Heart left ventricle (tissue), 16 donors: ENCODE measurements at regions of chr6 and their contacts with region 1.

Region 1: DNA sequence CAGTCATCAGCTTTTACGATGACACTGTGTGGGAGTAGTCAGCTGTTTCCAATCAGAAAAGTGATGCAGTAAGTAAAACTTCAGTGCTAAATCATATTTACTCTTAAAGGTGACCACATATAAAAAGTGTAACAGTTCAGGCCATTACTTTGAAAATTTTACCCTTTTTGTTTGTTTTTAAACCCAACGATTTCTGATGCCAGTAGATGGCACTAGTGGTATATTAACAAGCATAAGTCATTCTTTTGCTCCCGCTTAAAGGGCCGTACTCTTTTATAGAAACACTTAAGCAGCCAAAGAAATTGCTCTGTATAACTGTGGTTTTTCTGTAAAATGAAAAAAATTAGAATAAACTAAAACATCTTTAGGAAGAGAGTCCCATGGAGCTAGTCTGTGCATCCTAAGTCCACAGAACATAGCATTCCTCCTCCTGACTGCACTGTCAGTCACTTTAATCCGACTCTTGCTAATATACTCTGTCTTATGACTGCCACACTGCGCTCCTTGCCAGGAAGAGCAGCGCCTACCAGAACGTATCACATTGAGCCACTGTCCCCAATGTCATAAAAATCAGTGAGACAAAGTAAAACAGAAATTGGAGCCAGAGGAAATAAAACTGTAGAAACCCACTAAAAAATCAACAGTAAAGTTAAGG is 25.0 kb downstream of the HEBP2 start:
- DNase-seq: no peak
- ATAC-seq: peak in 3 of 4 donors; percentile 8 to 43 (median 33)
- H3K4me3 ChIP-seq: peak overlapping the region in 4 of 12 donors; percentile 10 to 24 (median 12)
- H3K27ac ChIP-seq: peak overlapping the region in 11 of 12 donors; percentile 31 to 85 (median 64)
- H3K4me1 ChIP-seq: peaks cover 0 to 51% (median 20%) of the 10 kb centered on the region in 12 donors
- H3K27me3 ChIP-seq: no peaks in the 10 kb centered on the region
- CTCF ChIP-seq: peak; percentile 42 to 77 (median 65)
- POLR2A ChIP-seq: no peak

Region 2: DNA sequence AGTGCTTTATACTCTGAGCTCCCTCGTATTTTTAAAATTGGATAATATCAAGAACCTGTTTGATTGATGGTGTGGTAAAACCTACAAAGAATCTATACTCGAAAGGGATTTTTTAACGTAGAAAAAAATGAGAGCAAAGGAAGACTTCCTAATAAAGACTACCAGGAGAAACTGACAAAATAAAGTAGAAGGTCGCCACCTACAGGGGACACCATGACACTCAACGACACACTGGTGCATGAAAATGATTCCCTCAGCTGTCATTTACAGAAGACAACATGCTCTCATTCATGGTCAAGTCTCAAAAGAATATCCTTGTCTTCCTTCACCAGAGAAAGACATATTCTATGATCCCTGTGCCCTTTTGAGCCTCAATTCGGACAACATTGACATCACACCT is 80.3 kb after region 1 on chr6:
- intact Hi-C with region 1: loop called in 9 of 10 experiments (anchors 2 to 10 kb)
- DNase-seq: peak in 1 of 5 donors; percentile 16
- ATAC-seq: peak in 3 of 4 donors; percentile 52 to 76 (median 64)
- H3K4me3 ChIP-seq: no peak overlapping the region
- H3K27ac ChIP-seq: no peak overlapping the region
- H3K4me1 ChIP-seq: peaks cover 0 to 17% (median 0%) of the 10 kb centered on the region in 12 donors
- H3K27me3 ChIP-seq: no peaks in the 10 kb centered on the region
- CTCF ChIP-seq: peak; percentile 33 to 61 (median 55)
- POLR2A ChIP-seq: no peak

Region 3: DNA sequence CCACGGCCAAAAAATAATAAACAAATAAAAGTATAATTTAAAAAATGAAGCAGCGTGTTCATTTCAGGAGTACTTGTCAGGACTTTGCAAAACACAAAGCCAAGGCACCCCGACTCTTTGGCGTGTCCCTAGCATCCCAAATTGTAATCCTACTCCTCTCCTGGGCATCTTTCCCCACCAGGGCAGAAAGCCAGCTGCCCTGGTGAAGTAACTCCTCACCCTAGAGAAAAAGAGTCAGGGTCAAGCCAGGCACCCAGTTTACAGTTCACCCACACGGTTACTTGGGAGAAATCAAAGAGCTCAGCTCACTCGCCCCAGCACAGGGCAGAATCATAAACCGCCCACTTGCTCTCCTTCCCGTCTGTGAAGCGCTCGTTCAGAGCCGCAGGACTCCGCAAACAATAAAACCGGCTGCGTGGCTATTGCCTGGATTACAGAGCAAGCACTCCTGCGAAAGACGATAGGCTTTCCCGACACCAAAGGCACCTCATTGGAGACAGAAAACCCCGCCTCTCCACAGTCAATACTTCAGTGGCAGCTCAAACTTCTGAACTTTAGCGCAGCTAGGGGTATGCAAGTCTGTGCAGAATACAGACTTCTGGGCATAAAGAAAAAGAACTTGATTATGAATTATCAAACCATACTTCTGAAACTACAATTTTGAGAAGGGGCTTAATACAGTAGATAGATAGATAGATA is 143.2 kb after region 1 on chr6:
- intact Hi-C with region 1: loop called in 4 of 10 experiments (anchors 5 to 10 kb)
- DNase-seq: peak; percentile 68 to 82 (median 72)
- ATAC-seq: peak; percentile 85 to 92 (median 92)
- H3K4me3 ChIP-seq: peak overlapping the region; percentile 21 to 61 (median 50)
- H3K27ac ChIP-seq: peak overlapping the region in 11 of 12 donors; percentile 29 to 81 (median 71)
- H3K4me1 ChIP-seq: peaks cover 0 to 24% (median 4%) of the 10 kb centered on the region in 12 donors
- H3K27me3 ChIP-seq: peaks cover 0 to 3% (median 0%) of the 10 kb centered on the region in 9 donors
- CTCF ChIP-seq: no peak
- POLR2A ChIP-seq: peak in 1 of 2 donors; percentile 53

Region 4: GRCh38 chr6:138654715-138655634 is 225.9 kb after region 1 on chr6:
- intact Hi-C with region 1: no loop called
- DNase-seq: no peak
- ATAC-seq: peak in 2 of 4 donors; percentile 54 to 72
- H3K4me3 ChIP-seq: no peak overlapping the region
- H3K27ac ChIP-seq: peak overlapping the region in 1 of 12 donors; percentile 34
- H3K4me1 ChIP-seq: peaks cover 0 to 17% (median 1%) of the 10 kb centered on the region in 12 donors
- H3K27me3 ChIP-seq: no peaks in the 10 kb centered on the region
- CTCF ChIP-seq: no peak
- POLR2A ChIP-seq: no peak

Region 5: DNA sequence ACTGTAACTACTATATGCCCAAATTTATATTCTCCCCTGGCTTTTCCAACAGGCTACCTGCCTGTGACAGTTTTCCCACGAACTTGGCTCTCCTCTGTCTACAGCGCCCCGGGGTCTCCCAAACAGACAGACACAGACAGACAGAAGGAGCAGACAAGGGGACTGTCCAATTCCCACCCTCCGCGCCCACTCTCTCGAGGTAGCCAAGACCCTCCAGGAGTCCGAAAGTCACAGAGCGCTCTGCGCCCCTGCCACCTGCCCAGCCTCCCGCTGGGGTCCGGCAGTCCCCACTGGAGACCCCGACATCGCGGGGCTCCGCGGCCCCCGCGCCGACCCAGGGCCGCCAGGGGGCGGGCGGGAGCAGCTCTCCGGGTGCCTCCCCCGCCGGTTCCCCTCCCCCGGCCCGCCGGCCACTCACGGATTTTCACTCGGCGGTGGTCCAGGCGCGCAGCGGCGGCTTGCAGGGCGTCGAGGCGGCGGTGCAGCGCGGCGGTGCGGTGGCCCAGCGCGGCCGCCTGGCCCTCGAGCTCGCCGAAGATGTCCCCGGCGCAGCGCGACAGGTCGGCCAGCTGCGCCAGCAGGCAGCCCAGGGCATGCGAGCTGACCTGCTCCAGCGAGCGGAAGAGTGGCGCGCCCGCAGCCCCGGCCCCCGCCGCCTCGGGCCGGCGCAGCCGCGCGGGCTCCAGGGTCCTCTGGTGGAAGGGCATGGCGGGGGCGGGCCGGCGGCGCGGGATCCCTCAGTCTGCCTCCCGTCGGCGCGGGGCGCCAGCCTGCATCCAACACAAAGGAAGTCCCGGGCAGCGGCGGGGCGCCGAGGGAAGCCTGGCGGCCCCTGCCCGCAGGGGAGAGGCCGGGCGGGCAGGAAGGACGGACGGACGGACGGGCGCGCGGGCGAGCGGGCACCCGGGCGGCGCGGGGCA is 263.2 kb after region 1 on chr6:
- intact Hi-C with region 1: loop called in 1 of 10 experiments (anchors 10 kb)
- DNase-seq: peak; percentile 72 to 91 (median 82)
- ATAC-seq: peak; percentile 61 to 90 (median 82)
- H3K4me3 ChIP-seq: peak overlapping the region; percentile 36 to 91 (median 72)
- H3K27ac ChIP-seq: peak overlapping the region; percentile 50 to 82 (median 68)
- H3K4me1 ChIP-seq: peaks cover 0 to 19% (median 4%) of the 10 kb centered on the region in 12 donors
- H3K27me3 ChIP-seq: no peaks in the 10 kb centered on the region
- CTCF ChIP-seq: peak; percentile 72 to 97 (median 88)
- POLR2A ChIP-seq: no peak